ENCODE measurements at regions of chr1 and their contacts with region 1.

Region 1: DNA sequence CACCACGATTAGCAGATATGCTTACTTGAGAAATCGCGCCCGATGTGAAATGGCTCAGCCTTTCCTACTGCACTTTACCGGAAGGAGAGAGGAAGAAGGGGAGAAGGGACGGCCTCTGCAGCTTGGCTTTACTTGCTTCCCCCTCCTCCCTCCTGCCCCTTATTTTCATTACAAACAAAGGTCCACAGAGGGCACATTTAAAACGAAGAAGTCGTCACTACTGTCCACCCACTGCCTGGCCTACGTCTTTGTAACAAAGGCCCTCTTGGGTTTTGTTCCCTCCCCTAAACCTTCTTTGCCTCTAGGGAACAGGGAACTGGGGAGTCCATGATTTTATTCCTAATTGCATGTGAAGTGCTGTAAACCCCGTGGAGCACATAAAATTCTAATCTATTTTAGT is 308.5 kb downstream of the LMX1A start:
- DNase-seq: no peak
- H3K4me3 ChIP-seq: no peak overlapping the region
- H3K27ac ChIP-seq: no peak overlapping the region
- H3K4me1 ChIP-seq: no peaks in the 10 kb centered on the region
- H3K27me3 ChIP-seq: no peaks in the 10 kb centered on the region
- CTCF ChIP-seq: no peak
- EP300 ChIP-seq: no peak
- POLR2A ChIP-seq: no peak

Region 2: GRCh38 chr1:164983023-164983650 is 64.9 kb before region 1 on chr1:
- intact Hi-C with region 1: loop called (anchors 10 kb)
- DNase-seq: peak; percentile 70
- H3K4me3 ChIP-seq: no peak overlapping the region
- H3K27ac ChIP-seq: peak overlapping the region in 2 of 4 donors; percentile 7 to 32
- H3K4me1 ChIP-seq: peaks cover 0 to 54% (median 35%) of the 10 kb centered on the region in 4 donors
- H3K27me3 ChIP-seq: no peaks in the 10 kb centered on the region
- CTCF ChIP-seq: no peak
- EP300 ChIP-seq: no peak
- POLR2A ChIP-seq: no peak